ENCODE measurements at regions of chr7 and their contacts with region 1.

Region 1: DNA sequence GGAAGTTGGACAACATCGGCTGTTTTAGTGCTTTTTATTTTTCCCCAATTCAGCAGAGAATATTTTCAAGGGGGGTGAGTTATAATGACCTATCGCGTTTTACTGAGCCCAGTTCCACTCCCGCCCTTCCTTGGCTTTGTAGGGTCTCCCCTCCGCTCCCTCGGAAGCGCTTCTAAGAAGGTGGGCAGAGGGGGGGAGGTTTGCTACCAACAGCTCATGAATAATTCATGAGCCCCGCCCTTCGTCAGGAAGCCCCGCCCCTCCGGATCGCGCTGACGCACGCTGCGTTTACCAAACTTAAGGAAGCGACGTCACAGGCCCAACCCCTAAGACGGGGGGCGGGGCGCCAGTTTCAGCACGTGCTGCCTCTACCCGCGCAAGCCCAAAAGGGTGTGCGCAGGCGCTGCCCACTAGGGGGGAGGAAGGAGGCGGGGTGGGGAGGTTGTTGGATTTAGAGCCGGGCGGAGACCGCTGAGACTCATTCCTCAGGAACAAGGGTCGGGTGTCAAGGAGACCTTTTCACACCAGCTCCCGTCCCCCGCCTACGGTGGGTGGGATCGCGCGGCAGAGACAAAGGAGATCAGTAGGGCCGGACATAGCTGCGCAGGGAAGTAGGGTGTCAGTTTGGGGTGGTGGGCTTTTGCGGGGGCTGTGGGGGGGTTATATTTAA is 529 bp upstream of the MEPCE start:
- DNase-seq: peak; percentile 100
- H3K4me3 ChIP-seq: peak overlapping the region; percentile 83 to 95
- H3K4me3 Mint-ChIP-seq: peak overlapping the region; percentile 91 to 100 (median 99)
- H3K27ac ChIP-seq: peak overlapping the region; percentile 100
- H3K27ac Mint-ChIP-seq: peak overlapping the region; percentile 99 to 100 (median 100)
- H3K4me1 ChIP-seq: peaks cover 41% of the 10 kb centered on the region
- H3K4me1 Mint-ChIP-seq: peaks cover 18 to 62% (median 36%) of the 10 kb centered on the region in 4 donors
- H3K27me3 ChIP-seq: no peaks in the 10 kb centered on the region
- H3K27me3 Mint-ChIP-seq: peaks cover 0 to 5% of the 10 kb centered on the region in 2 donors

Region 2: GRCh38 chr7:99504603-99505323 is 924.3 kb before region 1 on chr7 and contains the start of gene ZKSCAN5:
- CTCF ChIA-PET with region 1: no interaction called
- POLR2A ChIA-PET with region 1: interaction called, 8 read pairs
- intact Hi-C with region 1: loop called (anchors 2 kb)
- DNase-seq: peak; percentile 97 to 99 (median 97)
- H3K4me3 ChIP-seq: peak within 1 kb of the TSS; percentile 94 to 95
- H3K4me3 Mint-ChIP-seq: peak within 1 kb of the TSS; percentile 93 to 100 (median 99)
- H3K27ac ChIP-seq: peak within 1 kb of the TSS; percentile 86
- H3K27ac Mint-ChIP-seq: peak within 1 kb of the TSS; percentile 89 to 100 (median 99)
- H3K4me1 ChIP-seq: peaks cover 24% of the 10 kb centered on the region
- H3K4me1 Mint-ChIP-seq: peaks cover 18 to 42% (median 29%) of the 10 kb centered on the region in 4 donors
- H3K27me3 ChIP-seq: no peaks in the 10 kb centered on the region
- H3K27me3 Mint-ChIP-seq: no peaks in the 10 kb centered on the region
- total RNA-seq, gene ZKSCAN5: 8.8 to 9.3 TPM

Region 3: DNA sequence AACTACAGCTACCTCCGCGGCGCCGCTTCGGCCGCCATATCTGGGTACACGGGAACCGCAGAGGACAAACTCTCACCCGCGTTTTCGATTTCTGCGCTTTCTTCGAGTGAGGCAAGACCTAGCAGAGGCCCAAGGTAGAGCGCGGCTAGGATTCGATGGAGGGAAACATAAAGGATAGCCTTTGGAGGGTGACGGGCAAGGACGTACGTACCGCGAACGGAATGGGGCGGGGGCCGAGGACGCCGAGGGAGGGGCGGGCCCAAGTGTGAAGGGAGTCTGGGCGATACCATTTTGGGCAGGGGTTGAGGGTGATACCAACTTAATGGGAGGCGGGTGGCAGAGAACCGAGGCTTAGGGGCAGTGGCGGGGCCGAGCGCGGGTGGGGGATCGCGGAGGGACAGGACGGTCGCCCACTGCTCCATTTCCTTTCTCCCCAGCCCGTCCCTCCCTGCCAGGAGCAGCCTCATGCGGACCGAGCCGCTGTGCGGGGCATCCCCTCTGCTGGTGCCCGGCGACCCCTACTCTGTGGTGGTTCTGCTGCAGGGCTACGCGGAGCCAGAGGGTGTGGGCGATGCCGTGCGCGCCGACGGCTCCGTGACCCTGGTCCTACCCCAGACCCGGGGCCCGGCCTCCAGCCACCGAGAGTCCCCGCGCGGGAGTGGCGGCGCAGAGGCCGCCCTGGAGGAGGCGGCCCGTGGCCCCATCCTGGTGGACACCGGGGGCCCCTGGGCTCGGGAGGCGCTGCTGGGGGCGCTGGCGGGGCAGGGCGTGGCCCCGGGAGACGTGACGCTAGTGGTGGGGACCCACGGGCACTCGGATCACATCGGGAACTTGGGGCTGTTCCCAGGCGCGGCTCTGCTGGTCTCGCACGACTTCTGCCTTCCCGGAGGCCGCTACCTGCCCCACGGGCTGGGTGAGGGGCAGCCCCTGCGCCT is 301.9 kb before region 1 on chr7 and contains the start of gene MBLAC1:
- CTCF ChIA-PET with region 1: no interaction called
- POLR2A ChIA-PET with region 1: interaction called, 14 read pairs
- intact Hi-C with region 1: no loop called
- DNase-seq: peak; percentile 92 to 94 (median 93)
- H3K4me3 ChIP-seq: peak within 1 kb of the TSS; percentile 94 to 98
- H3K4me3 Mint-ChIP-seq: peak within 1 kb of the TSS; percentile 96 to 100 (median 99)
- H3K27ac ChIP-seq: peak within 1 kb of the TSS; percentile 87
- H3K27ac Mint-ChIP-seq: peak within 1 kb of the TSS; percentile 98 to 100 (median 100)
- H3K4me1 ChIP-seq: peaks cover 43% of the 10 kb centered on the region
- H3K4me1 Mint-ChIP-seq: peaks cover 20 to 46% (median 26%) of the 10 kb centered on the region in 4 donors
- H3K27me3 ChIP-seq: no peaks in the 10 kb centered on the region
- H3K27me3 Mint-ChIP-seq: no peaks in the 10 kb centered on the region
- total RNA-seq, gene MBLAC1: 6.4 to 6.8 TPM

Region 4: GRCh38 chr7:100407285-100408180 is 21.6 kb before region 1 on chr7:
- CTCF ChIA-PET with region 1: interaction called, 10 read pairs
- POLR2A ChIA-PET with region 1: interaction called, 8 read pairs
- intact Hi-C with region 1: no loop called
- DNase-seq: peak; percentile 57 to 63 (median 58)
- H3K4me3 ChIP-seq: no peak overlapping the region
- H3K4me3 Mint-ChIP-seq: no peak overlapping the region
- H3K27ac ChIP-seq: no peak overlapping the region
- H3K27ac Mint-ChIP-seq: no peak overlapping the region
- H3K4me1 ChIP-seq: peaks cover 4% of the 10 kb centered on the region
- H3K4me1 Mint-ChIP-seq: peaks cover 0 to 5% (median 2%) of the 10 kb centered on the region in 4 donors
- H3K27me3 ChIP-seq: no peaks in the 10 kb centered on the region
- H3K27me3 Mint-ChIP-seq: no peaks in the 10 kb centered on the region

Region 5: DNA sequence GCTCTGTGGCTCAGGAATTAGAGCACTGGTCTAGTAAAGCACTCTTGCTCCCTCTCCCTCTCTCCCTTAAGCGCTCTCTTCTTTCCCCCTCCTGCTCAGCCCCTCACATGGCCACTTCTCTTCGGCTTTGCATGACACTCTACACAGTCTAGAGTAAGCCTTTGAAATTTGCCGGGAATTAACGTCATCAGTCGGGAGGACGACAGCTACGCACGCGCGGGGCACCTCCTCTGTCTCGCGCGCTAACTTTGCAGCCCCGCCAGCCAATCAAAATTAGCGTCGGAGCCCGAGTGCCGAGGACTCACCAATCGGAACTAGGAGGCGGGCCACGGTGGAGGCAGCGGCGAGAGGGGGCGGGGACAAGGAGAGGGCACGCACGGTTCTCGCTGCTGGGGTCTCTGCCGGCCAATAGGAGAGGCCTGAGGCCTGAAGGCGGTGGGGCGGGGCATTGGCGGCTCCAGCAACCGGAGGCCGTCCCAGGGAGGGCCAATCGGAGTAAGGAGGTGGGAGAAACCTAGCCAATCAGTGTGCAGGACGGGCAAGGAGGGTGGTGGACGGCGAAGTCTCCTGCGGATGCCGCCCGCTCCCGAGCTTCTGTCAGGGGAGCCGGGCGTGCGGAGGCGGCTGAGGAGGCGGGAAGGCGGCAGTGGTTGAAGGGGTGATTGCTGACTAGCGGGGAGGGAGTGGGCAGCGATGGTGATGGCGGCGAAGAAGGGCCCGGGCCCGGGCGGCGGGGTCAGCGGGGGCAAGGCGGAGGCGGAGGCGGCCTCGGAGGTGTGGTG is 109.7 kb after region 1 on chr7 and contains the start of gene AGFG2:
- CTCF ChIA-PET with region 1: no interaction called
- POLR2A ChIA-PET with region 1: interaction called, 11 read pairs
- intact Hi-C with region 1: loop called (anchors 1 kb)
- DNase-seq: peak; percentile 100
- H3K4me3 ChIP-seq: peak within 1 kb of the TSS; percentile 33 to 79
- H3K4me3 Mint-ChIP-seq: peak within 1 kb of the TSS; percentile 88 to 99 (median 97)
- H3K27ac ChIP-seq: peak within 1 kb of the TSS; percentile 49
- H3K27ac Mint-ChIP-seq: peak within 1 kb of the TSS; percentile 84 to 95 (median 91)
- H3K4me1 ChIP-seq: peaks cover 42% of the 10 kb centered on the region
- H3K4me1 Mint-ChIP-seq: peaks cover 33 to 49% (median 41%) of the 10 kb centered on the region in 4 donors
- H3K27me3 ChIP-seq: no peaks in the 10 kb centered on the region
- H3K27me3 Mint-ChIP-seq: no peaks in the 10 kb centered on the region
- total RNA-seq, gene AGFG2: 56.6 to 58.3 TPM

Region 6: GRCh38 chr7:100611974-100612729 is 183.1 kb after region 1 on chr7 and contains the start of gene MOSPD3:
- CTCF ChIA-PET with region 1: no interaction called
- POLR2A ChIA-PET with region 1: interaction called, 30 read pairs
- intact Hi-C with region 1: loop called (anchors 1 kb)
- DNase-seq: peak; percentile 98 to 99 (median 98)
- H3K4me3 ChIP-seq: peak within 1 kb of the TSS; percentile 74 to 96
- H3K4me3 Mint-ChIP-seq: peak within 1 kb of the TSS; percentile 96 to 100 (median 98)
- H3K27ac ChIP-seq: peak within 1 kb of the TSS; percentile 85
- H3K27ac Mint-ChIP-seq: peak within 1 kb of the TSS; percentile 96 to 100 (median 100)
- H3K4me1 ChIP-seq: peaks cover 18% of the 10 kb centered on the region
- H3K4me1 Mint-ChIP-seq: peaks cover 14 to 32% (median 24%) of the 10 kb centered on the region in 4 donors
- H3K27me3 ChIP-seq: no peaks in the 10 kb centered on the region
- H3K27me3 Mint-ChIP-seq: no peaks in the 10 kb centered on the region
- total RNA-seq, gene MOSPD3: 13.4 to 15.6 TPM

Measured in CD4-positive, alpha-beta memory T cell (primary cell).